CD14-positive monocyte (primary cell): ENCODE measurements at regions of chr13 and their contacts with region 1.

Region 1: DNA sequence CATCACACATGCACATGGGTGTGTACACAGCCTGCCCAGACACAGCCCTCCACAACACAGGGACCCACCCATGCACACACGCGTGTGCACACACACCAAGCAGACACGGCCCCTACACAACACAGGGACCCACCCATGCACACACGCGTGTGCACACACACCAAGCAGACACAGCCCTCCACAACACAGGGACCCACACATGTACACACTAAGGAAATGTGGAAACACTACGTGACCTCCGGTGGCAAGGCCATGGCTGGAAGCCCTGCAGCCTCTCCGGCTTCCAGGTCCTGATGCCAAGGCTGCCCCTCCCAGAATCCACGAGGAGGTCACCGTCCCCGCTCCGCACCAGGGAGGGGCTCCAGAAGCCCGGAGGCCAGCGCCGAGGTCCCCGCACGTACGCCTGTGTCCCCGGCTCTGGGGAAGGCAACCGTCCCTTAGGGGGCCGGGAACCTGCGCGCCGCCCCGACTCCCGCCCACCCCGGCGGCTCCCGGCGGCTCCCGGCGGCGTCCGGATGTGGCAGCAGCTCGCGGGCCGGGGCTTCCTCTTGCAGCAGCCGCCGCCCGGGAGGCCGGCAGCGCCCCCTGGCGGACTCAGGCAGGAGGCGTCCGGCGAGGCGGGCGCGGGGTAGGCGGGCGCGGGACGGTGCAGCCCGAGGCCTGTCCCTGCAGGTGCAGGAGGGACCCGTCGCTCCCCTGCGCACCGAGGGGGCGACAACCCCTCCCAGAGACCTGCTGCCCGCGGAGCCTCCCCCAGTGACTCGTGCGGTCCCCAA is 29.8 kb upstream of the GRTP1 start:
- DNase-seq: peak; percentile 59 to 77 (median 62)
- H3K4me3 ChIP-seq: peak overlapping the region; percentile 55 to 75 (median 59)
- H3K4me3 Mint-ChIP-seq: peak overlapping the region; percentile 69 to 90
- H3K27ac ChIP-seq: no peak overlapping the region
- H3K27ac Mint-ChIP-seq: peak overlapping the region in 1 of 7 donors; percentile 66
- H3K4me1 ChIP-seq: peaks cover 5 to 12% of the 10 kb centered on the region in 2 donors
- H3K4me1 Mint-ChIP-seq: peaks cover 5% of the 10 kb centered on the region
- H3K27me3 ChIP-seq: no peaks in the 10 kb centered on the region
- H3K27me3 Mint-ChIP-seq: peaks cover 4 to 12% (median 5%) of the 10 kb centered on the region in 3 donors
- CTCF ChIP-seq: peak; percentile 91

Region 2: GRCh38 chr13:112942689-112943308 is 451.0 kb before region 1 on chr13:
- intact Hi-C with region 1: loop called (anchors 1 to 2 kb)
- DNase-seq: peak; percentile 83 to 85 (median 84)
- H3K4me3 ChIP-seq: peak overlapping the region in 1 of 3 experiments; percentile 71
- H3K4me3 Mint-ChIP-seq: peak overlapping the region; percentile 78 to 95
- H3K27ac ChIP-seq: no peak overlapping the region
- H3K27ac Mint-ChIP-seq: no peak overlapping the region
- H3K4me1 ChIP-seq: peaks cover 9 to 14% of the 10 kb centered on the region in 2 donors
- H3K4me1 Mint-ChIP-seq: peaks cover 9% of the 10 kb centered on the region
- H3K27me3 ChIP-seq: peaks cover 14 to 47% of the 10 kb centered on the region in 2 donors
- H3K27me3 Mint-ChIP-seq: peaks cover 37 to 61% (median 41%) of the 10 kb centered on the region in 3 donors
- CTCF ChIP-seq: peak; percentile 91